ENCODE measurements at regions of chr16 and their contacts with region 1.

Region 1: GRCh38 chr16:27179500-27180072 is 23.7 kb upstream of the KDM8 start:
- DNase-seq: peak; percentile 94
- H3K4me3 Mint-ChIP-seq: no peak overlapping the region
- H3K27ac Mint-ChIP-seq: peak overlapping the region; percentile 35
- H3K4me1 Mint-ChIP-seq: peaks cover 68% of the 10 kb centered on the region
- H3K27me3 Mint-ChIP-seq: peaks cover 16% of the 10 kb centered on the region

Region 2: GRCh38 chr16:26877421-26877820 is 302.2 kb before region 1 on chr16:
- CTCF ChIA-PET with region 1: no interaction called
- DNase-seq: no peak
- H3K4me3 Mint-ChIP-seq: no peak overlapping the region
- H3K27ac Mint-ChIP-seq: no peak overlapping the region
- H3K4me1 Mint-ChIP-seq: no peaks in the 10 kb centered on the region
- H3K27me3 Mint-ChIP-seq: no peaks in the 10 kb centered on the region

Region 3: DNA sequence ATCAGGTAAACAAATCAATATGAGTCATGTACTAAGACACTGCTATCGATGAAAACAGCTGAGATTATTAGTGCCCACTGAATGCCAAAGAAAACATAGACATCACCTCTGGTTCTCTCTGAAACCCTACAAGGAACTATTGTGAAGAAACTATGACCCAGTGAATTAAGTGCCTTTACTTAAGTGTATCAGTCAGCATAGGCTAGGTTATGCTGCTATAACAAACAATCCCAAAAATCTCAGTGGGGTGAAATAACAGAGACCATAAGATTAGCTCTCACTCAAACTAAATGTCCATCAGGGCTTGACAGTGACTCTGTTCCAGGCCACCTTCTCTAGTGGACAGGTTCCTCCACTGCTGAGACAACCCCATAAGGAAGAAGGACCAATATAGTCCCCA is 34.0 kb before region 1 on chr16:
- CTCF ChIA-PET with region 1: no interaction called
- DNase-seq: no peak
- H3K4me3 Mint-ChIP-seq: no peak overlapping the region
- H3K27ac Mint-ChIP-seq: no peak overlapping the region
- H3K4me1 Mint-ChIP-seq: no peaks in the 10 kb centered on the region
- H3K27me3 Mint-ChIP-seq: peaks cover 15% of the 10 kb centered on the region

Region 4: DNA sequence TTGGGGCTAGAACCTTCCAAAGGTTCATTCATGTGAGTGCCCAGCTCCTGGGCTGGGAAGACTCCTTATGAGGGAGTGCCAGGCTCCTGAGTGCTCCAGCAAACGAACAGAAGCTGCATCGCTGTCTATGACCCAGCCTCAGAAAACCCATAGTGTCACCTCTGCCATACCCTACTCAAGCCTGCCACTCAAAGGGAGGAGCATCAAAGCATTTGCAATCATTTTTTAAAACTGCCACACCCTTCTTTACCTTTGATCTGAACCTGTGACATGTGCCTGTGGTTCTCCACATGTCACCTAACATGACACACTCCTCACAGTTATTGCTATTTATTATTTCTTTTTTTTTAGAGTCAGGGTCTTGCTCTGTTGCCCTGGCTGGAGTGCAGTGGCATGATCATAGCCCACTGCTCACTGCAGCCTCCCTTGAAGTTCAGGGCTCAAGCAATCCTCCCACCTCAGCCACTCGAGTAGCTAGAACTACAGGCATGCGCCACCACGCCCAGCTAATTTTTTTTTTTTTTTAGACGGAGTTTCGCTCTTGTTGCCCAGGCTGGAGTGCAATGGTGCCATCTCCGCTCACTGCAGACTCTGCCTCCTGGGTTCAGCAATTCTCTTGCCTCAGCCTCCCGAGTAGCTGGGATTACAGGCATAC is 16.5 kb after region 1 on chr16:
- CTCF ChIA-PET with region 1: interaction called, 41 read pairs
- DNase-seq: peak; percentile 74
- H3K4me3 Mint-ChIP-seq: peak overlapping the region; percentile 51
- H3K27ac Mint-ChIP-seq: peak overlapping the region; percentile 98
- H3K4me1 Mint-ChIP-seq: peaks cover 87% of the 10 kb centered on the region
- H3K27me3 Mint-ChIP-seq: no peaks in the 10 kb centered on the region

Region 5: GRCh38 chr16:27211026-27211425 is 31.4 kb after region 1 on chr16:
- CTCF ChIA-PET with region 1: interaction called, 31 read pairs
- DNase-seq: no peak
- H3K4me3 Mint-ChIP-seq: no peak overlapping the region
- H3K27ac Mint-ChIP-seq: peak overlapping the region; percentile 33
- H3K4me1 Mint-ChIP-seq: peaks cover 19% of the 10 kb centered on the region
- H3K27me3 Mint-ChIP-seq: no peaks in the 10 kb centered on the region

Region 6: GRCh38 chr16:27235055-27235937 is 55.7 kb after region 1 on chr16:
- CTCF ChIA-PET with region 1: interaction called, 111 read pairs
- DNase-seq: peak; percentile 97
- H3K4me3 Mint-ChIP-seq: peak overlapping the region; percentile 74
- H3K27ac Mint-ChIP-seq: peak overlapping the region; percentile 99
- H3K4me1 Mint-ChIP-seq: peaks cover 99% of the 10 kb centered on the region
- H3K27me3 Mint-ChIP-seq: no peaks in the 10 kb centered on the region

Region 7: DNA sequence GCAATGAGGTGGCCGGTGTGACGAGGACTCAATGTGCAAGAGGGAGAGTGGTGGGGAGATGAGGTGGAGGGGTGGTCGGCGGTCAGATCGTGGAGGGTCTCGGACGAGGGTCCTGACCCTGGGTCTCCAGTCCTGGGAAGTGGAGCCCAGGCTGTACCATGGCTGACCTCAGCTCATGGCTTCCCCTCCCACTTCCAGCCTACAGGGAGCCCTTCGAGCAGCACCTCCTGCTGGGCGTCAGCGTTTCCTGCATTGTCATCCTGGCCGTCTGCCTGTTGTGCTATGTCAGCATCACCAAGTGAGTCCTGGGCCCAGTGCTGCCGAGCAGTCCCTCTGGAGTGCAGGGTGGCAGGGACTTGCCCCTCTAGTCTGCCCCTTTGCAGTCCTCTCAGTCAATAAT is 176.0 kb after region 1 on chr16:
- CTCF ChIA-PET with region 1: interaction called, 19 read pairs
- DNase-seq: peak; percentile 61
- H3K4me3 Mint-ChIP-seq: no peak overlapping the region
- H3K27ac Mint-ChIP-seq: peak overlapping the region; percentile 58
- H3K4me1 Mint-ChIP-seq: peaks cover 13% of the 10 kb centered on the region
- H3K27me3 Mint-ChIP-seq: no peaks in the 10 kb centered on the region